ENCODE measurements at regions of chr3 and their contacts with region 1.

Region 1: GRCh38 chr3:51941798-51942602 is at the starts of genes PARP3 and RRP9:
- DNase-seq: peak; percentile 99 to 100
- H3K4me3 ChIP-seq: peak within 1 kb of the TSS; percentile 49
- H3K4me3 Mint-ChIP-seq: peak within 1 kb of the TSS; percentile 63
- H3K27ac Mint-ChIP-seq: peak within 1 kb of the TSS; percentile 6
- H3K4me1 ChIP-seq: peaks cover 13% of the 10 kb centered on the region
- H3K4me1 Mint-ChIP-seq: peaks cover 7% of the 10 kb centered on the region
- H3K27me3 ChIP-seq: no peaks in the 10 kb centered on the region
- H3K27me3 Mint-ChIP-seq: no peaks in the 10 kb centered on the region
- CTCF ChIP-seq: peak; percentile 95
- total RNA-seq, gene PARP3: 3.3 and 5.6 TPM in 2 replicates
- total RNA-seq, gene RRP9: 39.1 and 43.0 TPM in 2 replicates

Region 2: GRCh38 chr3:51967384-51968169 is 25.6 kb after region 1 on chr3 and contains the start of gene PCBP4:
- CTCF ChIA-PET with region 1: interaction called, 3 read pairs
- POLR2A ChIA-PET with region 1: no interaction called
- intact Hi-C with region 1: loop called (anchors 1 kb)
- DNase-seq: peak; percentile 79 to 80
- H3K4me3 ChIP-seq: peak within 1 kb of the TSS; percentile 53
- H3K4me3 Mint-ChIP-seq: peak within 1 kb of the TSS; percentile 86
- H3K27ac Mint-ChIP-seq: peak within 1 kb of the TSS; percentile 79
- H3K4me1 ChIP-seq: peaks cover 13% of the 10 kb centered on the region
- H3K4me1 Mint-ChIP-seq: peaks cover 20% of the 10 kb centered on the region
- H3K27me3 ChIP-seq: no peaks in the 10 kb centered on the region
- H3K27me3 Mint-ChIP-seq: no peaks in the 10 kb centered on the region
- CTCF ChIP-seq: no peak
- total RNA-seq, gene PCBP4: 42.3 and 46.5 TPM in 2 replicates

Region 3: GRCh38 chr3:51982782-51983577 is 41.0 kb after region 1 on chr3 and contains the start of gene ACY1:
- CTCF ChIA-PET with region 1: interaction called, 41 read pairs
- POLR2A ChIA-PET with region 1: interaction called, 15 read pairs
- intact Hi-C with region 1: no loop called
- DNase-seq: peak; percentile 95 to 96
- H3K4me3 ChIP-seq: peak within 1 kb of the TSS; percentile 46
- H3K4me3 Mint-ChIP-seq: peak within 1 kb of the TSS; percentile 99
- H3K27ac Mint-ChIP-seq: peak within 1 kb of the TSS; percentile 86
- H3K4me1 ChIP-seq: peaks cover 46% of the 10 kb centered on the region
- H3K4me1 Mint-ChIP-seq: peaks cover 15% of the 10 kb centered on the region
- H3K27me3 ChIP-seq: no peaks in the 10 kb centered on the region
- H3K27me3 Mint-ChIP-seq: no peaks in the 10 kb centered on the region
- CTCF ChIP-seq: peak in 1 of 2 experiments; percentile 0
- total RNA-seq, gene ACY1: 62.4 and 67.9 TPM in 2 replicates

Region 4: DNA sequence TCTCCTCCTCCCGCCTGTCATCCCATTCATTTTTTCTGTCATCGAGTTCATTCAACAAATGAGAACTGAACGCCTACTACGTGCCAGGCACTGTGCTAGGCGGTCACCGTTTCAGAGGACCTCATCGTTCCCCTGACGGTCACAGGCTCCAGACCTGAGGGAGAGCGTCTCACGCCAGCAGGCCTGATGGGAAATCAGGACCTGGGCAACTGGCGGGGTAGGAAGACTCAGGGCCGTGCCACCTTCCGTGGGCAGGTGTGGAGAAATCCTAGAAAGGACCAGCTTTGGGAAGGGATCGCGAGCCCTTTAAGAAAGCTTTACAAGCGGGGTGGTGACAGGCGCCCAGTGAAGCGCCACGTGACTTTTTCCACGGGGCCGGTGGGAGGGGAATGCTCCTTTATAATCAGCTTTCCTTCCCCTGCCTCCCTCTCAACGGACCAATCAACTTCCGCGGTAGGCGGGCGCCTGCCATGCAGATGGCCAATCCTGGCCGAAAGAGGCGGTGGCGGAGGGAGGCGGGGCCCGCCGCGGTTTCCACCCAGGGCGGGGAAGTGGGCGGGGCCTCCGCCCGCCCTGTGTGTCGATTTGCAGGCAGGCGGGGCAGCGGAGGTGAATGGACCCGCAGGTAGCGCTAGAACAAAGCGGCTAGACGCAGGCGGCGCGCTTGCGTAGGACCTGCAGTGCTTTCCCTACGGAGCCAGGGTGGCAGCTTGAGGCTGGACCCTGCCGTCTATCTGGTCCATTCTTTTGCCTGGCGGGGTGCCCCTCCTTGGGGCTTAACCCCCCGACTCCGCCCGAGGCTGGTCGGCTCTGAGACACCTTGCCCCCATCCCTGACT is 115.2 kb after region 1 on chr3:
- CTCF ChIA-PET with region 1: interaction called, 19 read pairs
- POLR2A ChIA-PET with region 1: interaction called, 4 read pairs
- intact Hi-C with region 1: no loop called
- DNase-seq: peak; percentile 98 to 99
- H3K4me3 ChIP-seq: peak overlapping the region; percentile 82
- H3K4me3 Mint-ChIP-seq: peak overlapping the region; percentile 89
- H3K27ac Mint-ChIP-seq: peak overlapping the region; percentile 89
- H3K4me1 ChIP-seq: peaks cover 4% of the 10 kb centered on the region; the same call in 1 of the 2 replicates
- H3K4me1 Mint-ChIP-seq: no peaks in the 10 kb centered on the region
- H3K27me3 ChIP-seq: no peaks in the 10 kb centered on the region
- H3K27me3 Mint-ChIP-seq: no peaks in the 10 kb centered on the region
- CTCF ChIP-seq: peak in 1 of 2 experiments; percentile 21

Region 5: DNA sequence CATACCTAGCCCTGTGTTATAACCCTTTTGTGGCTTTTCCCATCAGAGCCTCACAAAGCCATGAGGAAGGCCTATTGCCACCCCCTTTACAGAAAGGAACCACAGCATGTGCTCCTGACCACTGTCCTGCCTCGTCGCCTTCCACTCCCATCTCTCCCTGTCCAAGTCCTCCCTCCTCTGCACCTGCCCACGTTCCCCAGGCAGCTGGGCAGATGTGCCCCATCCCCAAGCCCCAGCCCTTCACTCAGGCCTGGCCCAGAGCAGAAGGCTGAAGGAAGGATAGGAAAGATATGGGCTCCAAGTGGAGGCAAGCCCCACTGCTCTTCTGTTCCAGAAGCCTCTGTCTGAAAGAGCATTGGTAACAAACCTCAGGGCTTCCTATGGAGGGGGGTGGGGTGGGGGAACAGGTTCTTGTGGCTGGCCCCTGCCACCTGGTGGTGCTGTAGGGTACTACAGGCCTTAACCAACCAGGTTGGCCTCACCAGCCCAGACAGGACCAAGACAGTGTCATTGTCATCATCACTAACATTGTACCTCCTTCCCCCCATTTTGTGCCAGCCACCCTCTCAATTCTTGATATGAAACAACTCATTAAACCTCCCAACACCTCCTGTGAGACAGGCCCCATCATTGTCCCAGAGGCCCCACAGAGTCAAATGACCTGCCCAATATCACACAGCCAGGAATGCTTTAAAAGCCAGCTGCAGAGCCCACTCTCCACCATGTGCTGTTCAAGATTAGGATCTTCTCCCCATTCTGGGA is 202.2 kb after region 1 on chr3:
- CTCF ChIA-PET with region 1: interaction called, 4 read pairs
- POLR2A ChIA-PET with region 1: no interaction called
- intact Hi-C with region 1: loop called (anchors 1 kb)
- DNase-seq: peak; percentile 82 to 84
- H3K4me3 ChIP-seq: no peak overlapping the region
- H3K4me3 Mint-ChIP-seq: no peak overlapping the region
- H3K27ac Mint-ChIP-seq: no peak overlapping the region
- H3K4me1 ChIP-seq: no peaks in the 10 kb centered on the region
- H3K4me1 Mint-ChIP-seq: no peaks in the 10 kb centered on the region
- H3K27me3 ChIP-seq: no peaks in the 10 kb centered on the region
- H3K27me3 Mint-ChIP-seq: no peaks in the 10 kb centered on the region
- CTCF ChIP-seq: peak; percentile 91 to 97